ENCODE measurements at regions of chr6 and their contacts with region 1.

Region 1: DNA sequence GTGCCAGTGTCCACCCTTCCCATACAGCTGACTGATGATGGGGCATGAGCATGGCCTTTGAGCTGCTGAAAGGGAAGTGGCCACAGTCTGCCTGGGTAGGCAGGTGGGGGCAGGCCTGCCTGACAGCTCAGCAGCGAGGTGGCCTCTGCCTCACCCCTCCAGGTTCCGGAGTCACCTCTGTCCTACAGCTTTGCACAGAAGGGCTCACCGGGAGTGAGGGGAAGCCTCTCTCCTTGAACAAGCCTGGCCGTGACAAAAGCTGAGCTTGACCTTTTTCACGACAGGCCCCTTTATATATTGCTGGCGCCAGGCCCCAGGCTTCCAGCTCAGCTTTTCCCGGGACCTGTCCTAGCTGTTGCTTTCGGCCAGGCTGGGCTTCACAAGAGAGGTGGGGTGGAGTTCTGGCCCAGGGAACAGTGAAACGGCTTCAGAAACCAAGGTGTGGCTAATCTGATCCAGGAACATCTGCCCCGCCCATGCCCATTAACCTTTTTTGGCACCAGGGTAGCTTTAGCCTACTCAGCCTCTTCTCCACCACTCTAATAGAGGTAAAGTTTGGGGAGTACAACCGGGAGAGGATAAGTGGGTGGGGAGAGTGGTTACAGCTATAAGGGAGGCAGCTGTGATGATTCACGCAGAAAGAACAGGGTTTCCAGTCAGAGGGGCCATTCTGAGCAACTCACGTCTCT is 42.9 kb downstream of the C6orf132 start:
- DNase-seq: peak; percentile 96
- H3K4me3 ChIP-seq: peak overlapping the region in 1 of 3 experiments; percentile 20
- H3K27ac ChIP-seq: peak overlapping the region; percentile 90
- H3K4me1 ChIP-seq: peaks cover 29% of the 10 kb centered on the region
- H3K27me3 ChIP-seq: no peaks in the 10 kb centered on the region
- CTCF ChIP-seq: no peak

Region 2: GRCh38 chr6:42118162-42119001 is 18.9 kb after region 1 on chr6:
- CTCF ChIA-PET with region 1: no interaction called
- dilution Hi-C with region 1: no loop called
- in situ Hi-C with region 1: no loop called
- intact Hi-C with region 1: loop called (anchors 2 kb)
- DNase-seq: peak; percentile 85
- H3K4me3 ChIP-seq: no peak overlapping the region
- H3K27ac ChIP-seq: peak overlapping the region; percentile 29
- H3K4me1 ChIP-seq: peaks cover 49% of the 10 kb centered on the region
- H3K27me3 ChIP-seq: no peaks in the 10 kb centered on the region
- CTCF ChIP-seq: no peak